Psoas muscle (tissue), 8 donors: ENCODE measurements at regions of chr15 and their contacts with region 1.

Region 1: DNA sequence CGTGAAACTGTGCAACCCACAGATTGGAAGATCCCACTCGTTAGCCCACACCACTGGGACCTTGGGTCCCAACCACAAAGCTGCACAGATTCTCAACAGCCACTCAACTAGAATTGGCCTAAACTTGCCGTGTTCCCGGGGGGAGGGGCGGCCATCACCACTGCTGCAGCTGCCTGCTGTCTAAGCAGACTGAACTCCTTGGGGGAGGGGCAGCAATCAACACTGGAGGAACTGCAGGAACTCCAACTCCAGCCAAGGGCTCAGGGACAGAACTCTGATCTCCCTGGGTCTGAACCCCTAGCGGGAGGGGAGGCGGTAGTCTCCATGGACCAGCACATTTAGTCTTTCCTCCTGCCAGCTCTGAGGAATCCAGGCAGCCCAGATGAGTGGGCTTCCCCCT is 205.9 kb downstream of the RSL24D1 start:
- DNase-seq: no peak
- ATAC-seq: no peak
- H3K4me3 ChIP-seq: no peak overlapping the region
- H3K27ac ChIP-seq: no peak overlapping the region
- H3K4me1 ChIP-seq: no peaks in the 10 kb centered on the region
- H3K27me3 ChIP-seq: no peaks in the 10 kb centered on the region
- CTCF ChIP-seq: no peak

Region 2: GRCh38 chr15:54941417-54941816 is 49.4 kb before region 1 on chr15:
- intact Hi-C with region 1: loop called in 1 of 2 experiments (anchors 10 kb)
- DNase-seq: no peak
- ATAC-seq: no peak
- H3K4me3 ChIP-seq: no peak overlapping the region
- H3K27ac ChIP-seq: no peak overlapping the region
- H3K4me1 ChIP-seq: no peaks in the 10 kb centered on the region
- H3K27me3 ChIP-seq: no peaks in the 10 kb centered on the region
- CTCF ChIP-seq: no peak

Region 3: DNA sequence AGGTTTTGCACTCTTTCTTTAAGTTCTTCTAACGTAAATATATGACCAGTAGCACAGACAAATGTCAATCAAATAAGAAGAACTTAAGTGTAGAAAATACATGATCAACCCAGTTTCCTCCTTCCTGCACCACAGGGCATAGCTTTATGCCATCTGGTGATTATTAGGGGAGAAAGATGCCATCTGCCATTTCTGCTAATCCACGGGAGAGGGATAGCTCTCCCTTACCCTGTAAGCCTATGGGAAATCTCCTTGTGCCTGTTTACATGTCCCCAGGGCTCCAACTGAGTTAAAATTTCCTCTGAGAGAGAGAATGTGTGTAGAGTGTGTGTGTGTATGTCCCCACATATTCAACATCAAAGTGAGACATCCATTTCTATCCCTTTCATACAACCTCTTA is 70.0 kb after region 1 on chr15:
- intact Hi-C with region 1: no loop called
- DNase-seq: no peak
- ATAC-seq: no peak
- H3K4me3 ChIP-seq: no peak overlapping the region
- H3K27ac ChIP-seq: no peak overlapping the region
- H3K4me1 ChIP-seq: no peaks in the 10 kb centered on the region
- H3K27me3 ChIP-seq: no peaks in the 10 kb centered on the region
- CTCF ChIP-seq: no peak